ENCODE measurements at regions of chr7 and their contacts with region 1.

Region 1: DNA sequence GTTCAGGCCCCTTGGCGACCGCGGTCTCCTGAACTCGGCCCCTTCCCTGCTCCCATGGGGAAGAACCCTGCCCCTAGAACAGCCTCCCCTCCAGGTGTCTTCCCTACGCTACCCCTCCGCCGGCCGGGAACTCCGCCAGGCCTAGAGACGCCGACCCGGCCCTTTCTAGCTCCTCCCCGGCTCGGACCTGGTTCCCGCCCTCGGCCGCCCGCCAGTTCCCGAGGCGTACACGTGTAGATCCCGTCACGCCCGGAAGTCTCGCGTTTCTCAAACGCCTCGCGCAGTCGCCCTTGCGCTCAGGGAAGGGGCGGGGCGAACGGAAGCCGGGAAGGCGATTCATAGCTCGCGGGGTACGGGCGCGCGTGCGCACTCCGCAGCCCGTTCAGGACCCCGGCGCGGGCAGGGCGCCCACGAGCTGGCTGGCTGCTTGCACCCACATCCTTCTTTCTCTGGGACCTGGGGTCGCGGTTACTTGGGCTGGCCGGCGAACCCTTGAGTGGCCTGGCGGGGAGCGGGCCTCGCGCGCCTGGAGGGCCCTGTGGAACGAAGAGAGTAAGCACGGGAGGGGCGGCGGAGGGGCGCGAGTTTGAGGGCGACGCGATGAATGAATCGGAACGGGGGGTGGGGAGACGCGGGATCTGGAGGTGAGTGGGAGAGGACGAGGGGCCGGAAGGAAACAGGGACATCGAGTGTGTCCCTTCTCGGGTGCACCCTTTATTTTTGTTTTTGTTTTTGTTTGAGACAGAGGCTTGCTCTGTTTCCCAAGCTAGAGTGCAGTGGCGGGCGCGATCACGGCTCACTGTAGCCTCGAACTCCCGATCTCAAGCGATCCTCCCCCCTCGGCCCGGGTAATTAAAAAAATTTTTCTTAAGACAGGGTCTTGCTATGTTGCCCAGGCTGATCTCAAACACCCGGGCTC is at the start of gene POP7:
- ATAC-seq: peak; percentile 88 to 96 (median 92)
- H3K4me3 ChIP-seq: peak within 1 kb of the TSS; percentile 56 to 99 (median 77)
- H3K27ac ChIP-seq: peak within 1 kb of the TSS; percentile 94 to 98
- H3K4me1 ChIP-seq: peaks cover 9 to 12% of the 10 kb centered on the region in 2 donors
- total RNA-seq, gene POP7: 32.0 to 59.6 (median 38.6) TPM

Region 2: GRCh38 chr7:100837099-100837836 is 131.3 kb after region 1 on chr7:
- in situ Hi-C with region 1: loop called in 1 of 9 experiments (anchors 25 kb)
- ATAC-seq: peak; percentile 92 to 99 (median 97)
- H3K4me3 ChIP-seq: peak overlapping the region; percentile 26 to 42 (median 34)
- H3K27ac ChIP-seq: peak overlapping the region; percentile 74 to 89
- H3K4me1 ChIP-seq: peaks cover 12 to 13% of the 10 kb centered on the region in 2 donors

Region 3: DNA sequence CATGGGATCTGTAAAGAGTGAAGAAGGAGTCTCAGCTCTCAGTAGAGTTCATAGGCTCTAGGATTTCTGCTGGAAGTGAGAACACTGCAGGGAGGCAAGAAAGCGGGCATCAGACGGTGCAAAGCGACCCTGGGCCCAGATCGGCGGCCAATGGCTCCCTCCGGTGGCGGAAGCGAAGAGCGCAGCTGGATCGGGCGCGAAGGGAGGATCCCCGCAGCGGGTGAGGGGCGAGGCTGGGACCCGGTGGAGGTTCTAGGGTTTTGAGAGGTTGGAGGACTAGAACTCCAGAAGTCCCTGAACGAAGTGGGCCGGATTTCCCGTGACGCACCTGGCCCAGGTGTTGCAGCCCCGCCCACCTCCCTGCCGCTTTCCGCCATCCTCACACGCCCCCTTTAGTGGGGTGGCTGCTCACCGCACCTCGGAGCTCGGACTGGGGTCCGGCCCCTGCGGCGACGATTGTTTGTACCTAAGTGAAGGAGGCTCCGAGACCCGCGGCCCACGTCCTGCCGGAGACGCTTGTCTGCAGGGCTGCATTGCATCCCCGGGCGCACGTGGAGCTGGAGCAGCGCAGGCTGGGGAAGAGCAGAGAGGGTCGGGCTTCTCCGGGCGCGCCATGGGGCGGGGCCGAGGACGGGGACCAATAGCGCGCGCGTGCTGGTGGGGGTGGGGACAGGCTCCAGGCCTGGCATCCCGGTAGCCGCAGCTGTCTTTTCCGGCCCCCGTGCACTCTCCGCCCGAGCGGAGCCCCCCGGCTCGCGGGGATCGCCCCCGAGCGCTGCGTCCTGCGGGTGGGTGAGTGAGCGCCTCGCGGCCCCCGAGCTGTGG is 146.2 kb after region 1 on chr7 and contains the start of gene SLC12A9:
- in situ Hi-C with region 1: loop called in 7 of 9 experiments (anchors 10 to 25 kb)
- ATAC-seq: peak; percentile 99
- H3K4me3 ChIP-seq: peak within 1 kb of the TSS; percentile 50 to 78 (median 77)
- H3K27ac ChIP-seq: no peak within 1 kb of the TSS
- H3K4me1 ChIP-seq: peaks cover 4 to 6% of the 10 kb centered on the region in 2 donors
- total RNA-seq, gene SLC12A9: 6.8 to 29.3 (median 11.9) TPM

Region 4: GRCh38 chr7:101031082-101031481 is 325.1 kb after region 1 on chr7:
- in situ Hi-C with region 1: no loop called
- ATAC-seq: no peak
- H3K4me3 ChIP-seq: no peak overlapping the region
- H3K27ac ChIP-seq: no peak overlapping the region
- H3K4me1 ChIP-seq: no peaks in the 10 kb centered on the region